GM13977 (cell line): ENCODE measurements at regions of chrX and their contacts with region 1.

Region 1: GRCh38 chrX:109911046-109911445 is 91.9 kb upstream of the TMEM164 start:
- DNase-seq: no peak
- CTCF ChIP-seq: peak; percentile 40

Region 2: DNA sequence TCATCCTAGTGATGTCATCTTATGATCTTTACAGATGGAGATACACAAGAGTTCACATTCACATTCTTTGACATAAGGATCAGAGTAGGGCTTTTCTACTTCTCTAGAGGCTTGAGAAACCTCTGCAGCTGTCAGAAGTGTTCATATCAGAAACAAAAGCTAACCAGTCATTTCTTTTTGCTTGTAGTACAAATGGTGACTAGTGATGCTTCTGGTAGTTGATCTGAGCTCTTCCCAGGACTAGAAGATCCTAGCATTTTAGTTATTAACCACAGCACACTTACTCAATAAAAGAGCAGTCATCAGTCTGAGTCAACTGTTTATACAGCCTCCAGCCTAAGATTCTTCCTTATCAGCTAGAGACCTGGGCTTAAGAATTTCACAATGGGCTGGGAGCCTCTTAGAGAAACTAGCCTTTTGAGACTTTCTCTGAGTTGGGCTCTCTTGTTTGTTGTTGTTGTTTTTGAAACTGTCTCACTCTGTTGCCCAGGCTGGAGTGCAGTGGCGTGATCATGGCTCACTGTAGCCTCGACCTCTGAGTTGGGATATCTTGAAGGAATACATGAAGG is 176.0 kb after region 1 on chrX:
- in situ Hi-C with region 1: no loop called
- DNase-seq: no peak
- CTCF ChIP-seq: no peak

Region 3: DNA sequence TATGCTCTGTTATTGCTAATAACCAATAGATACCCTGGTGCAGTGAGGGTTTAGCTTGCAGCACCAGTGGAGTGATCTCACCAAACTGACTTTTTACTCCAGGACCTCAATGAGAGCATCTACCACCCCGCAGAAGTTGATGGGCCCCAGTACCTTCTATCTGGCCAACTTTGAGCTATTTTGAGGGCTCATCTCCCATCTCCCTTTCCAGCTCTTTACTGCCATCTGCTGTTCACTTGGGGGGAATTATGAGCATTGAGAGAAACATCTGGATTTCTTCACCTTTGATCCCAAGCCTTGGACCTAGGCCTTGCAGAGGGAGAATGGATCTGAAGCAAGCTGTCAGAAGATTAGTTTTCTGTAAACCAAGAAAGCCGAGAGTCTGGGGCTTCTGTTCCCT is 235.5 kb after region 1 on chrX:
- in situ Hi-C with region 1: loop called (anchors 25 kb)
- DNase-seq: peak; percentile 51
- CTCF ChIP-seq: peak; percentile 76

Region 4: DNA sequence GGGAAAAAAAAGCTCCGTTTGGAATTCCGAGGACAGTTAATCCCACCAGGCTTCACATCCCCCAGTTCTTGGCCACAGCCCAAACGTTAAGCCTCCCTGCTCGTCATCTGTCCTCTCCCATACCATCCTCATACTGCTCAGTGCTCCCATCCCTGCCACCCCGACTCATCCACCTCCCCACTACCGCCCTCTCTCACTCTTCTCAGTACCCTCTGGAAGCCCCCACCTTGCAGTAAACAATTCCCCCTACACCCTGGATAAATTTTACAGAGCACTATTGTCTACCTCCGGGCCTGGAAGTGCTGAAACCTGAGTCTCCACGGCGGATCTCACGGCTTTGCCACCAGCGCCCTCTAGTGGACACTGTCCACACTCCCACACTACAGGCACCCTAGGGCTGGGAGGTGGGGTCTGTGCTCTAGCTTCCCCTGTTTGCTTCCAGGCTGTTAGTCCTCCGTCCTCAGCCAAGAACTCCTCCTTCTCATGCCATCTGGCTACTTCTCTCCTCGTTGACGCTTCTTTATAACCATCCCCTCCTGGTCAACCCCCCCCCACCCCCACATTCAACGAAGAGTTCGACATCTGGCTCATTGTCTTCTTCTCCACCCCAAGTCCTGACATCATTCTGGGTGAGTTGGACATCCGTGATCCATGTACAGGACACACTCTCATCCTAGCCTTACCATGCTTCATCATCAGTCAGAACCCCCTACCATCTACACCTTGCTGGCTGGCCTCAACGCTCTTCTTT is 502.1 kb after region 1 on chrX:
- in situ Hi-C with region 1: loop called (anchors 25 kb)
- DNase-seq: peak; percentile 52
- CTCF ChIP-seq: peak; percentile 95